ENCODE measurements at regions of chr2 and their contacts with region 1.

Region 1: GRCh38 chr2:946073-946948 is 4.3 kb upstream of the SNTG2 start:
- DNase-seq: peak; percentile 30
- H3K4me3 Mint-ChIP-seq: peak overlapping the region; percentile 42
- H3K27ac Mint-ChIP-seq: peak overlapping the region; percentile 84
- H3K4me1 Mint-ChIP-seq: peaks cover 28% of the 10 kb centered on the region
- H3K27me3 Mint-ChIP-seq: peaks cover 10% of the 10 kb centered on the region

Region 2: GRCh38 chr2:854460-854859 is 91.9 kb before region 1 on chr2:
- CTCF ChIA-PET with region 1: no interaction called
- intact Hi-C with region 1: loop called (anchors 5 kb)
- DNase-seq: peak; percentile 73
- H3K4me3 Mint-ChIP-seq: no peak overlapping the region
- H3K27ac Mint-ChIP-seq: no peak overlapping the region
- H3K4me1 Mint-ChIP-seq: peaks cover 19% of the 10 kb centered on the region
- H3K27me3 Mint-ChIP-seq: no peaks in the 10 kb centered on the region

Region 3: DNA sequence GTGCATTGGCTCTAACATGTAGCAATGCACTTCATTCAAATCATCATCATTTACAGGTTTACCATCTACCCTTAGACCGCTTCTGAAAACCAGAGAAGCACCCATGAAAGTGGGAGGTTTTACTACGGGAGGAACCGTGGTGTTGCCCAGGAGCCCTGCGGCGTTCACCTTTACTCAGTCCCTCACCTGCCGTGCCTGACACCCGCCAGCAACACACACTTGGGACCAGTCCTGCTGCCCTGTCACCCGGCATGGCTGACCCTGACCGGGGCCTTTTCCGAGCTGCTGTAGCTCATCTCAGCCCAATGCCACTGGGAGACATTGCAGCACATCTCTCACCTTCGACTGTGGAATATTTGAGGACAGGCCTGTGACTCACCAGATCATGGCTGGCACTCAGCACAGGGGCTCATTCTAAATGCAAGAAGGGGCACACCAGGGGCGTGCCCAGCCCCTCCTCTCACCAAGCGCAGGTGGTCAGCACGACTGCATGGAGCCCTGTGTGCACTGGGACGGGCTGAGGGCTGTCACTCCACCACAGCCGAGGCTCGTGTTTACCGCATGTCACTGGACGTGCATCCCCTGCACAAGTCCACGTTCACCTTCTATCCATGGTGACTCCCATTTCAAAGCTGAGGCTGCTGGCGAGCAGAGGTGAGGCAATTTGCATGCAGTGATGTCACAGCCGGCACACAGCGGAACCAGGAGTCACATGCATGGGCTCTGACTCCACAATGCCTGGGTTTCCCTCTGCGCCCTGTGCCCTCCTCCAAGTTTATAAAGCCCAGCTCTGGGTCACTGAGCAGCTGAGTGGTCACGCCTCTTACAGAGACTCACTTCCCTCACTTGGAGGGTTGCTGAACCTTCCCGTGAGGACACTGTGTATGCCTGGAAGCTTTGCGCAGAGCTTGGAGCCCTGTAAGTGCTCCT is 72.4 kb before region 1 on chr2:
- CTCF ChIA-PET with region 1: no interaction called
- intact Hi-C with region 1: no loop called
- DNase-seq: no peak
- H3K4me3 Mint-ChIP-seq: no peak overlapping the region
- H3K27ac Mint-ChIP-seq: no peak overlapping the region
- H3K4me1 Mint-ChIP-seq: no peaks in the 10 kb centered on the region
- H3K27me3 Mint-ChIP-seq: peaks cover 11% of the 10 kb centered on the region

Region 4: DNA sequence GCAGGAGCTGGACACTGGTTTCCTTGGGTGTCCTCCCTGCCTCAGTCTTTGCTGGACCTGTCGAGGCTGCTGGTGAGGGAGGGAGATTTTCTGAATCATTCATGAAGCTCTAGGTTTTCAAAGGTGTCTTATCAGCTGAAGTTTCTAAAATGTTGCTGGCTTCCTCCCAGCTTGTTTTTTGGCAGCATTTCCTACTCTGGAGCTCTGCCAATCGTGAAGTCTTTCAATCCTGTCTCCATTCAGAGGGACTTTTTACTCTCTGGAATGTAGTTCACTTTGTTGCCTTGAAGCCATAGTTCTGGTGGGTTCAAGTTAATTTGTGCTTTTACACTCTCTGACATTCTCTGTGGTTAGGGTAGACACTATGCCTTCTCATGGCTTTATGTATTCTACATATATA is 28.2 kb after region 1 on chr2:
- CTCF ChIA-PET with region 1: no interaction called
- intact Hi-C with region 1: loop called (anchors 2 kb)
- DNase-seq: peak; percentile 15
- H3K4me3 Mint-ChIP-seq: peak overlapping the region; percentile 40
- H3K27ac Mint-ChIP-seq: peak overlapping the region; percentile 60
- H3K4me1 Mint-ChIP-seq: peaks cover 28% of the 10 kb centered on the region
- H3K27me3 Mint-ChIP-seq: peaks cover 6% of the 10 kb centered on the region

Measured in activated naive CD4-positive, alpha-beta T cell treated with anti-CD3 and anti-CD28 coated beads for 36 hours (primary cell).